ENCODE measurements at regions of chr4 and their contacts with region 1.

Region 1: GRCh38 chr4:145481164-145481941 is at the start of gene SMAD1:
- DNase-seq: peak; percentile 28
- H3K4me3 Mint-ChIP-seq: peak within 1 kb of the TSS; percentile 83
- H3K27ac Mint-ChIP-seq: peak within 1 kb of the TSS; percentile 81
- H3K4me1 Mint-ChIP-seq: peaks cover 13% of the 10 kb centered on the region
- H3K27me3 Mint-ChIP-seq: peaks cover 30% of the 10 kb centered on the region
- total RNA-seq, gene SMAD1: 5.8 and 7.5 TPM in 2 replicates

Region 2: GRCh38 chr4:145097821-145098674 is 383.3 kb before region 1 on chr4 and contains the starts of genes ABCE1 and ANAPC10:
- intact Hi-C with region 1: loop called (anchors 2 kb)
- DNase-seq: peak; percentile 93
- H3K4me3 Mint-ChIP-seq: peak within 1 kb of the TSS; percentile 95
- H3K27ac Mint-ChIP-seq: peak within 1 kb of the TSS; percentile 99
- H3K4me1 Mint-ChIP-seq: peaks cover 25% of the 10 kb centered on the region
- H3K27me3 Mint-ChIP-seq: no peaks in the 10 kb centered on the region
- total RNA-seq, gene ABCE1: 162 and 173 TPM in 2 replicates
- total RNA-seq, gene ANAPC10: 28.0 and 29.4 TPM in 2 replicates

Region 3: DNA sequence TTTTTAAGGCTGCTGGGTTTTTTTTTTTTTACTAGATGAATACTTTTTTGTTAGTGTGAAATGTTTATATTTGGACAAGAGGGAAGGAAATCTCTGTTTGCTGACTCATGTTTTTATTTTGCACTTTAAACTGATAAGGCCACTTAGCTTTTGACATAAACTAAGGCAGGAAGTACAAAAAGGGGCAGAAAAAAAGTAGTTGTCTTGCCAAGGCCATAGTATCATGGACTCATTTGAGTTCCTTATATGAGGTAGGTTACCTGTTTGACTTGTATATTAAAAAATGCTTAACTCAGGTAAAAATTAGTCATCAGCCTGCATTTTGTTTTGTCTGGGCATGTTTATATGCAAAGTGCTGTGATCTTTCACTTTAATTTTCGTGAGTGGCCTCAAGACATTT is 26.3 kb after region 1 on chr4:
- intact Hi-C with region 1: no loop called
- DNase-seq: no peak
- H3K4me3 Mint-ChIP-seq: no peak overlapping the region
- H3K27ac Mint-ChIP-seq: no peak overlapping the region
- H3K4me1 Mint-ChIP-seq: peaks cover 3% of the 10 kb centered on the region
- H3K27me3 Mint-ChIP-seq: peaks cover 3% of the 10 kb centered on the region

Region 4: DNA sequence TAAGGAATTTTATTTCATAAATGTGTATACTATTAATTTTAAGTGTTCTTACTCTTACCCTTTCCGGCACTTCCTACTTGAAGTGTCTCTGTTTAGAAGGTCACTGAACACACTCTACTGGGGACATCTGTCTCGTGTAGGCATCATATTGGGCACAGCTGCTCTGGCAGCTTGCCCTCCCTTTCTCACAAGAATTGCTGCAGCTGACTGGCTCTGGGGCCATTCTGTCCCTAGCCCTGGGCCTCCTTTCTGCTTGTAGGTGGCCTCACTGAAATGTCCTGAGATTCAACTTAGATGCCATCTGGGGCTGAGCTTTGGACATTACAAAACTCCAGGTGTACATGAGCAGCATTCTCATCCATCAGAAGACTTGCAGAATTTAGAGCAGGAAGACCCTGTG is 49.9 kb after region 1 on chr4:
- intact Hi-C with region 1: no loop called
- DNase-seq: no peak
- H3K4me3 Mint-ChIP-seq: no peak overlapping the region
- H3K27ac Mint-ChIP-seq: no peak overlapping the region
- H3K4me1 Mint-ChIP-seq: peaks cover 7% of the 10 kb centered on the region
- H3K27me3 Mint-ChIP-seq: peaks cover 9% of the 10 kb centered on the region

Region 5: DNA sequence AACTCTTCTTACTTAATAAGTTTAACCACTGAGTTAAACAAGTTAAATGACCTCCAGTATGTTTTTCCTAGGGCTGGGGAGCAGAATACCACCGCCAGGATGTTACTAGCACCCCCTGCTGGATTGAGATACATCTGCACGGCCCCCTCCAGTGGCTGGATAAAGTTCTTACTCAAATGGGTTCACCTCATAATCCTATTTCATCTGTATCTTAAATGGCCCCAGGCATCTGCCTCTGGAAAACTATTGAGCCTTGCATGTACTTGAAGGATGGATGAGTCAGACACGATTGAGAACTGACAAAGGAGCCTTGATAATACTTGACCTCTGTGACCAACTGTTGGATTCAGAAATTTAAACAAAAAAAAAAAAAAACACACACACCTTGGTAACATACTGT is 76.4 kb after region 1 on chr4:
- intact Hi-C with region 1: loop called (anchors 2 kb)
- DNase-seq: peak; percentile 42
- H3K4me3 Mint-ChIP-seq: no peak overlapping the region
- H3K27ac Mint-ChIP-seq: no peak overlapping the region
- H3K4me1 Mint-ChIP-seq: peaks cover 1% of the 10 kb centered on the region
- H3K27me3 Mint-ChIP-seq: no peaks in the 10 kb centered on the region

Region 6: DNA sequence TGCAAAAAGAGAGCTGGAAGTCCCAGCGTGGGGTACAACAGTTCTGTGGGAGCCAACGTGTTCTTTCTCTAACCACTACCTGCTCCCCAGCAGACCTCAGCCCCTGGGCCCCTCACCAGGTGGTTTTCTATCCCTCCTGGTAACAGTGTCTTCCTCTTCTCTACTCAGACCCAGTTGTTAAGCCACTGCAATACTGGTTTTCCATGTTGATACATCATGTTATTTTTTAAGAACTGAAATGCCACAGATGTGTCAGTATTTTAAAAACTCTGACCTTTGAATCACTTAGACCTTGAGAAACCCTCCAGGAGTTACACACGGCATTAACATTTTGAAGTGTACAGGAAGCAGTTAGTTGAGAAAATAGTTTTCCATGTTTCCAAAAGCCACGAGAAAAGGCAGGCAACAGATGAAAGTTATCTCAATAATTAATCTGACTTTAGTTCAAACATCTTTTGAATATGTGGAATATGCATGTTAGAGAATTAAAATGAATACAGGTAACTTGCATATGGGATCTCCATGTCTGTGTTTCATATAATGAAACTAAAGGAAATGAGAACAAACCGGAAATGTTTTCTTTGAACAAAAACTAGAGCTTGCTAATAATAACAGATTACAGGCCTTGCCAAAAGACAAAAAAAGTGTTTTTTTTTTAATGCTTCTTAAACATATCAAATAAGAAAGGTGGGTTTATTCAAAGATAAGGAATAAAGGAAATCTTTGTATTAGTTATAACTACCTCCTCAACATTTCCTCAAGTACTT is 348.5 kb after region 1 on chr4:
- intact Hi-C with region 1: loop called (anchors 5 kb)
- DNase-seq: peak; percentile 13
- H3K4me3 Mint-ChIP-seq: peak overlapping the region; percentile 62
- H3K27ac Mint-ChIP-seq: peak overlapping the region; percentile 84
- H3K4me1 Mint-ChIP-seq: peaks cover 46% of the 10 kb centered on the region
- H3K27me3 Mint-ChIP-seq: no peaks in the 10 kb centered on the region

Region 7: DNA sequence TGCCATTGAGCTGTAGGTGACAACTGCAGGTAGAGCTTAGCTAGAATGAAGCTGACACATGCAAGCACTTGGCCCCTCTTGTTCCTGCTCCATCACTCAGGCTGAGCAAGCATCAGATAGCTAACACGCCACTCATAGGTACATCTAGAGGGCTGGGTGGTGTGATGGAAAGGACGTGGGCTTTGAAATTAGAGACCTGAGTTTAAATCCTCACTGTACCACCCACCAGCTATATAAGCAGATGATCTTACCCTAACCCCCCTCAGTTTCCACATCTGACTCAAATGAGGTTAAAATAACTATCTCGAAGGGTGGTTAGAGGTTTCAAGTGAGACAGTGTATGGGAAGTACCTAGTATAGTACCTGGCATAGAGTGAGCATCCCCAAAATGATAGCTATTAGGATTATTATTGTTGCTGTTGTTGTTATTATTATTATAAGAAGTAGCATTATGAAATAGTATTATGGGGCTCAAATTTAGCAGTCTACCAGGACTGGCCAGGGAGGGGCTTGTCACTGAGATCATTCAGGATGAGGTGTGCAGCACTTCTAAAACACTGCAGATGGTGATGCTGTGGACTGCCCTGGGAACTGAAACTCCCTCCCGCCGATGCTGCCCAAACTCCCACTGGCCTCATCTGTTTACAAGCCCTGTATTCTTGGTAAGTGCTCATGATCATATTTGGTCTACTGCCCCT is 792.0 kb after region 1 on chr4:
- intact Hi-C with region 1: loop called (anchors 10 kb)
- DNase-seq: no peak
- H3K4me3 Mint-ChIP-seq: no peak overlapping the region
- H3K27ac Mint-ChIP-seq: peak overlapping the region; percentile 5
- H3K4me1 Mint-ChIP-seq: peaks cover 7% of the 10 kb centered on the region
- H3K27me3 Mint-ChIP-seq: no peaks in the 10 kb centered on the region